ENCODE measurements at regions of chr10 and their contacts with region 1.

Region 1: GRCh38 chr10:29119374-29119773 is 169.5 kb upstream of the LYZL1 start:
- DNase-seq: no peak
- ATAC-seq: no peak
- H3K4me3 ChIP-seq: no peak overlapping the region
- H3K27ac ChIP-seq: no peak overlapping the region
- H3K4me1 ChIP-seq: no peaks in the 10 kb centered on the region
- H3K27me3 ChIP-seq: no peaks in the 10 kb centered on the region
- CTCF ChIP-seq: no peak
- EP300 ChIP-seq: no peak
- POLR2A ChIP-seq: no peak
- RAD21 ChIP-seq: no peak

Region 2: DNA sequence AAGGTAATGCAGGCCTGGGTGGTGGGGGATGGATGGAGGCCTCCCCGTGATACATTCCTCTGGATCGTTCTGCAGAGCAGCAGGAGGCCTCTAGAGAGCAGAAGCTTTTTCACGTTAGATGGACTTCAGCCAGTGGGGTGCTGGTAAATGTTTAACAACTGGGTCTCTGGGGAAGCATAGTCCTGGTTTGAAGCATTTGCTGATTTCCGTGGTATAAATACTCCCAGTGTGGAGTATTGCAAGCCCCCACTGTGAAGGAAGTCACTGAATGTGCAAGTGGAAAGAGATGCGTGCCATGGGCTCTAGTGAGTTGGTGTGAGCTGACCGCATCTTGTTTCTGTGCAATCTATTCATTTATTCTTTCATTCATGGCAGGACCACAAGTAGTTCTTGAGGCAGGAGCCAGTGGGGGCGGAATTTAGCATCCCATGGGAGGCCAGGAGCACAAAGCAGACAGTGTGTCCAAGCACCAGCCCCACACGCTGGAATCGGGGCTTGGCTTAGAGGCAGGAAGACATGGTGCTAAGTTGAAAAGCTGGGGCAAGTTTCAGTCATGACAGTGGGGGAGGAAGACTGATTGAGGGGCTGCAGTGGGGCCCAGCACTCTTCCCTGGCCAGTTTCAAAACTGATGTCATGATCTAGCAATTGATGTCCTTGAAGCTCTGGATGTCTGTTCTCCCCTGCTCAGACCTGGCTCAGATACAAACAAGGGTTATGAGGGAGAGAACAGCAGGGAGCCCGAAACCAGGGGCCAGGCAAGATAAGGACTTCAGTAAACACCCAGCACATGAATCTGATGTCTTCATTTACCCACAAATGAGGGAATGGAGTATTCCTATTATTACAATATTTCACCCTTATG is 111.4 kb before region 1 on chr10:
- CTCF ChIA-PET with region 1: no interaction called
- POLR2A ChIA-PET with region 1: no interaction called
- RAD21 ChIA-PET with region 1: no interaction called
- SMC1A ChIA-PET with region 1: no interaction called
- in situ Hi-C with region 1: loop called (anchors 25 kb)
- intact Hi-C with region 1: no loop called
- DNase-seq: no peak
- ATAC-seq: no peak
- H3K4me3 ChIP-seq: no peak overlapping the region
- H3K27ac ChIP-seq: no peak overlapping the region
- H3K4me1 ChIP-seq: no peaks in the 10 kb centered on the region
- H3K27me3 ChIP-seq: no peaks in the 10 kb centered on the region
- CTCF ChIP-seq: no peak
- EP300 ChIP-seq: no peak
- POLR2A ChIP-seq: no peak
- RAD21 ChIP-seq: no peak